ENCODE measurements at regions of chr2 and their contacts with region 1.

Region 1: GRCh38 chr2:120694034-120694433 is 41.6 kb upstream of the GLI2 start:
- DNase-seq: no peak
- H3K4me3 ChIP-seq: no peak overlapping the region
- H3K27ac ChIP-seq: no peak overlapping the region
- H3K4me1 ChIP-seq: no peaks in the 10 kb centered on the region
- H3K27me3 ChIP-seq: no peaks in the 10 kb centered on the region
- CTCF ChIP-seq: no peak
- EP300 ChIP-seq: no peak
- POLR2A ChIP-seq: no peak

Region 2: GRCh38 chr2:119826370-119826961 is 867.6 kb before region 1 on chr2:
- intact Hi-C with region 1: no loop called
- DNase-seq: no peak
- H3K4me3 ChIP-seq: no peak overlapping the region
- H3K27ac ChIP-seq: no peak overlapping the region
- H3K4me1 ChIP-seq: no peaks in the 10 kb centered on the region
- H3K27me3 ChIP-seq: no peaks in the 10 kb centered on the region
- CTCF ChIP-seq: no peak
- EP300 ChIP-seq: no peak
- POLR2A ChIP-seq: no peak

Region 3: DNA sequence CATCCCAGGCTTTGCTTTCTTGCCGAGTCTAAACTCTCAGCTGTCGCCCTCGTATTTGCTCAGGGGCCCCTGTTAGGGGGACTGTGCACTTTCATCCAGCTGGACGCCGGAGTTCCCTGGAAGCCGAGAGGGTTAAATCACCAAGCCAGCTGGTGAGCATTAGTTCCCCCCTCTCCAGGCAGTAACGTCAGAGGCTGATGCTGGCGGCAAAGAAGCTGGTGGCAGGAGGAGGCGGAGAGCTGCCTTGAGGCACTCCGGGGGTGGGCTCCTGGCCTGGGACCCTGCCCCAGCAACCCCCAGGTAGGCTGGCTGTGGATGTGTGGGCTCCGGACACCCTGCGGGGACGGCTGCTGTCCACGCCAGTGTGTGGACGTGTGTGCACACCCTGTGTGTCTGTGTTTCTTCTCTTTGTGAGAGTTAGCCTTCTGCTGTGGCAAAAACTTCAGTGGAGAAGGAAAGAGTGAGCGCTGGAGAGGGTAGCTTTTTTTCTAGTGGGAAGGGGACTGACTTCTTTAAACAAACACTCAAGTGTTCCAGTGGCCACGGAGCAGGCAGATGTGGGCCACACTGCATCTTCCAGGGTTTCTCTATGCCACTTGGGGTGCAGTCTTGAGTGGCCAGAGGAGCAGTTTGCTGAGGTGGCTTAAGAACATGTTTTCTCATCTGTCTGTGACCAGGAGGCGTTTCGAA is 126.4 kb after region 1 on chr2:
- intact Hi-C with region 1: no loop called
- DNase-seq: peak; percentile 69 to 78 (median 76)
- H3K4me3 ChIP-seq: no peak overlapping the region
- H3K27ac ChIP-seq: peak overlapping the region in 1 of 2 donors; percentile 77
- H3K4me1 ChIP-seq: peaks cover 35% of the 10 kb centered on the region
- H3K27me3 ChIP-seq: no peaks in the 10 kb centered on the region
- CTCF ChIP-seq: no peak
- EP300 ChIP-seq: no peak
- POLR2A ChIP-seq: no peak

Region 4: DNA sequence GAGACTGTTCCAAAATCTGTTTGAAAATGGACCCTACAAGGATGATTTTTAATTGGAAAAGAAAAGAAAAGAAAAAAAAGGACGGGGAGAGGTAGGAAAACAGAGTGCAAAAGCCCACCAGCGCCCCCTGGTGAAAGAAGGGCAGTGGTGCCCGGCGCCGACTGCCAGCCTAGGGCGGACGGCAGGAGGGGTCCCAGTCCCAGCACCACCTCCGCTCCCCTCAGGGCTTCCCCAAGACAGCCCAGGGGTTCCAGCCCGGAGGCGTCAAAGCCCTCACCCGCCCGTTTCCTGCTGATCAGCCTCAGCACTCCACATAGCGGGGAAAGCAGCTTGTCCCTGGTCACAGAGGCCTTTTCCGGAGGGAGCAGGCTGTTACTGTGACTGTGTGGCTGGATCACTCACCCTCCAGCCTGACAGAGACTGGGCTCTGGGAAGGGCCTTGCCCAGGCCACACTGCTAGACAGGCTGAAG is 377.0 kb after region 1 on chr2:
- intact Hi-C with region 1: loop called (anchors 2 to 5 kb)
- DNase-seq: peak; percentile 68 to 91 (median 90)
- H3K4me3 ChIP-seq: no peak overlapping the region
- H3K27ac ChIP-seq: no peak overlapping the region
- H3K4me1 ChIP-seq: no peaks in the 10 kb centered on the region
- H3K27me3 ChIP-seq: no peaks in the 10 kb centered on the region
- CTCF ChIP-seq: peak; percentile 82 to 92 (median 85)
- EP300 ChIP-seq: no peak
- POLR2A ChIP-seq: no peak

Region 5: GRCh38 chr2:121076885-121077549 is 383.0 kb after region 1 on chr2:
- intact Hi-C with region 1: loop called (anchors 2 to 5 kb)
- DNase-seq: peak in 3 of 5 donors; percentile 45 to 73 (median 49)
- H3K4me3 ChIP-seq: no peak overlapping the region
- H3K27ac ChIP-seq: no peak overlapping the region
- H3K4me1 ChIP-seq: no peaks in the 10 kb centered on the region
- H3K27me3 ChIP-seq: no peaks in the 10 kb centered on the region
- CTCF ChIP-seq: peak in 2 of 3 donors; percentile 17 to 22
- EP300 ChIP-seq: no peak
- POLR2A ChIP-seq: no peak

Region 6: DNA sequence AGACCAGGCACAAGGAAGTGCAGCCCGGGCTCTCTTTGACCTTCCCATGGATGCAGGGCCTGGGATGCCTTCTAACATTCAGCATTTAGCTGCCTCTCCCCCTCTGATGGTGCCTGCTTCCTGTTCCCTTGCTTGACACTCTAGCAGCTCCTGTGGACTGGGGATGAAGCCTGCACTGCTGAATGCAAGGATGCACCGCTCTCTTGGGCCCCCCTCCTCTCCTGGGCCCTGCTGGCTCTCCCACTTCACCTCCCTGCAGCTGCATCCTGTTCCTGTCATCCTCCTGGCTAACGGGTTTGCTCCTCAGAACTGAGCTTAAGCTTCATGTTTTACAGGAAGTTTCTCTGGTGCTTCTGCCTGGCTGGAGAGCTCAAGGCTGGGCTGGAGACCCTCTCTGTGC is 1315.5 kb after region 1 on chr2:
- intact Hi-C with region 1: no loop called
- DNase-seq: no peak
- H3K4me3 ChIP-seq: no peak overlapping the region
- H3K27ac ChIP-seq: no peak overlapping the region
- H3K4me1 ChIP-seq: no peaks in the 10 kb centered on the region
- H3K27me3 ChIP-seq: no peaks in the 10 kb centered on the region
- CTCF ChIP-seq: no peak
- EP300 ChIP-seq: no peak
- POLR2A ChIP-seq: no peak

Region 7: DNA sequence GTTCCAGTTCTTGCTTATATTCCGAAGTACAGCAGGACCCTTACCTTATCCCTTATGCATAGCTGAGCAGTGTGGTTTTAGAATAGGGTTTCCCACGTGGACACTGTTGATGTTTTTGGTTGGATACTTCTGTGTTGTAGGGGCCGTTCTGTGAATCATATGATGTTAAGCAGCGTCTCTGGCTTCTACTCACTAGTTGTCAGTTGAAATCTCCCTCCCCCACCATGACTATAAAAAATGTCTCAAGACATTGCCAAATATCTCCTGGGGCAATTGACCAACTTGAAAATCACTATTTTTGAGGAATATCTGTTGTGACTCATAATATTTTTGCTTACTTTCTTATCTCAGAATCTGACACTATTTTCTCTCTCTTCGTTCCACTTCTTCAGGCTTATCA is 1775.1 kb after region 1 on chr2:
- intact Hi-C with region 1: no loop called
- DNase-seq: no peak
- H3K4me3 ChIP-seq: no peak overlapping the region
- H3K27ac ChIP-seq: no peak overlapping the region
- H3K4me1 ChIP-seq: no peaks in the 10 kb centered on the region
- H3K27me3 ChIP-seq: no peaks in the 10 kb centered on the region
- CTCF ChIP-seq: no peak
- EP300 ChIP-seq: no peak
- POLR2A ChIP-seq: no peak